Activated T-helper 1 cell treated with anti-CD3 and anti-CD28 coated beads, Interleukin-12 subunit alpha, Interleukin-12 subunit beta, Interleukin-2, Interleukin-4 antibody, amounts not matched to agents 30 ng/mL and 10 ng/mL and 1 ng/mL, durations not matched to agents 14 hours and 24 hours and 36 hours (primary cell): ENCODE measurements at regions of chr1 and their contacts with region 1.

Region 1: DNA sequence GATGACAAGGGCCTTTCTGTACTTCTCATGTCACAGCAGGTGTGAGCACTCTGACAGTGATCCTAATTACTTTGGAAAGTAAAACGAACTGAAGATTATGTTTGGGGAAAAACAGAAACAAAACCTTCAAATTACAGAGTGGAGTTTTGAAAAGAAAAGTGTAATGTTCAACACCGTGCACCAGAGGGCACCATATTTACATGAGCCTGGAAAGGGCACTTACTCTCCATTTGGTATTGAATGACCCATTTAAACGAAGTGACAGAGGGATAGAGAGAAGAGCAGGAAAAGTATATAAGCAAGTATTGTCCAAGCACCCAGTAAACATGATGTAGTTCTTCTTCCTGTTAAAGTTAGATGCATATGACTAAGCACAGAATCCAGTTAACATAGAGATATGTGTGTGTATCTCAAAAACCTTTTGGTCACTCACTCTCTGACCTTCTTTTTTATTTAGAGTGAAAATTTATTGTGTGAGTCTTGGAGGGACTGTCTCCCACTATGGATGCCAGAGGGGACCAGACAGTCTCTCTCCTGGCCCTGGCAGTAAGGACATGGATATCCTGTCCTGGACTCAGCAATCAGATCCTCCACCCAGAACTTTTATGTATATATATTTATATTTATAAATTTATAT is 3.8 kb upstream of the RGSL1 start:
- DNase-seq: no peak
- H3K4me3 Mint-ChIP-seq: no peak overlapping the region
- H3K27ac Mint-ChIP-seq: no peak overlapping the region
- H3K4me1 Mint-ChIP-seq: peaks cover 7% of the 10 kb centered on the region
- H3K27me3 Mint-ChIP-seq: peaks cover 3% of the 10 kb centered on the region

Region 2: DNA sequence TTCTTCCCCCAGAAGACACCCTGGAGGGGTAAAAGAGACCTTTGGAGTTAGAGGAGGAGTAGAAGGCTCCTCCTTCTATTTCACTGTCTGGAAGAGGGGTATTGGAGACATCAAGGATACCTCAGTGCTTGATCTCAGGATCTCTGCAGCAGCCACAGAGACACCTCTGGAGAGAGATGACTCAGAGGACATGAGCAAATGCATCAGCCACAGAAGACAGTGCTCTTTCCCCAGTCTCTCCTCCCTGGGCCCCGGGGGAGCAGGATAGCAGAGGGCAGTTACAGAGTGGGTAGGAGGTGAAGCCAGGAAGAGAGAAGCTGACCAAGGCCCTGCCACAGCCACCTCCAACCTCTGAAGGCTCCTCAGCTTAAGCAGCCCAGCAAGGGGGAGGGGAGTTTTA is 30.4 kb before region 1 on chr1:
- intact Hi-C with region 1: loop called (anchors 1 kb)
- DNase-seq: no peak
- H3K4me3 Mint-ChIP-seq: no peak overlapping the region
- H3K27ac Mint-ChIP-seq: no peak overlapping the region
- H3K4me1 Mint-ChIP-seq: peaks cover 7% of the 10 kb centered on the region
- H3K27me3 Mint-ChIP-seq: peaks cover 10% of the 10 kb centered on the region

Region 3: GRCh38 chr1:182595641-182596240 is 149.6 kb after region 1 on chr1:
- intact Hi-C with region 1: loop called (anchors 2 kb)
- DNase-seq: peak; percentile 34
- H3K4me3 Mint-ChIP-seq: no peak overlapping the region
- H3K27ac Mint-ChIP-seq: no peak overlapping the region
- H3K4me1 Mint-ChIP-seq: peaks cover 16% of the 10 kb centered on the region
- H3K27me3 Mint-ChIP-seq: peaks cover 2% of the 10 kb centered on the region

Region 4: DNA sequence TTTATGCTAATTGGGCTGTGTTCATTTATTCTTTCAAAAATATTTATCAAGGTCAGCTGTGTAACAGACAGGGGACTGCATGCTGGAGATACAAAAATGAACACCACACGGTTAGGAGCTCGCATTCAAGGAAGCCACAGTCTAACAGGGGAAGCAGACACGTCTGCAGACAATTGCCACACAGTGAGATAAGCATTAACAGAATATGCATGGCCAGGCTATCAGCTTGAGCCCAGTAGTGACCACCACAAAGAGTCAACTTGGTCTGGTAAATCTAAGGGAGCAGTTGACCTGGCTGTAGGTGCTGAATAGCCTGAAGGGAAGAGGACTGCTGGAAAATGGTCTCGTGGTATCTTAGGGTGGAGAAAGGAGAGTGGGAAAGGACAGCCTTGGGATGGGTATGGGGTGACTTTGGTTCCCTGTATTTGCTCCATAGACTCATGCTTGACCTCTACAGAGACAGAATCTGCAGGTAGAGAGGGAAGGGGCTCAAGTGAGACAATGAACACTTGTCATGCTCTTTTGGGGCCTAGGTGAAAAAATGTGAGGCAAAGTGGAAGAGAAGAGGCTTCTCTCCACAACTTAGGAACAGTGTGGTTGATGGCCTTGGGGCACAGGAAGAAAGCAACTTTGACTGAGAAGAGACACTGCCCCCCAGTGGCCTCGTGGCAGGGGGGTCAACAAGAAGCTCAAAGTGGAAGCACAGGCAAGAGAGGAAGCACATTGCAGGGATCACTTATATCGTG is 335.9 kb after region 1 on chr1:
- intact Hi-C with region 1: loop called (anchors 1 kb)
- DNase-seq: peak; percentile 52
- H3K4me3 Mint-ChIP-seq: no peak overlapping the region
- H3K27ac Mint-ChIP-seq: no peak overlapping the region
- H3K4me1 Mint-ChIP-seq: peaks cover 30% of the 10 kb centered on the region
- H3K27me3 Mint-ChIP-seq: peaks cover 4% of the 10 kb centered on the region